Colonic mucosa (tissue), 4 donors: ENCODE measurements at regions of chr9 and their contacts with region 1.

Region 1: DNA sequence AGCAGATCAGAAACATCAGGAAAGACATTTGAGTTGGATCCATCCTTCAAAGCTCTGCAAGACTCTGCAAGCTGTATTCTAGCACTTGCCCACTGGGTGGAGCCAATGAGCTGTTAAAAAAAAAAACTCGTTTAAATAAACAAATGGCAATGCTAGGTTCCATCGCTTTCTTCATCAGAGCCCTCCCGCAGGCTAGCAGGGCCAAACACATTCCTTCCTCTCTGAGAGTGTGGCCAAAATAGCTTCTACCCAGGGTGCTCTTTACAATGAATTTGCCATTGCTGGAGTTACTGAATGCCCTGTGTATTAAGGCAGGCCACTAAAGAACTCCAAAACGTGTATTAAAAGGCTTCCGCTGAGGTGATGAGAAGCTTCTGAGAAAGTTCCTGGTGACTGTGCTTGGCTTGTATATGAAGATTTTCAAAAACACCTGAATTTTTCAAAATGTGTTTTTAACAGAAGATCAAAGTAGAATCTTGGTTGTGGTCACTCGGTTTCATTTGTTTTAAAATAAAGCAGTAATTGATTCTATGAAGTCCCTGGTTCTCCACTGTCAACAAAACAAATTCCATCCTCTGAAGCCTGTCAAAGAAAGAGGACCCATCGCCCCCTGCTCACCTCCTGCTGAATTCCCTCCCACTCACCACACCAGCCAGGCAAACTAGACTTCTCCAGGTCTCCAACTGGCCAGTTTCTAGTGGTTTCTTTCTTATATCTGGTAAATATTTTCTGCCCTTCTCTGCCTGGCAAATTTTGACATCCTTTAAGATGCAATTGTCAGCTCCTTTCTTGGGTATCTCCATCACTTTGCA is 36.5 kb upstream of the EQTN start:
- DNase-seq: peak; percentile 66
- H3K4me3 ChIP-seq: no peak overlapping the region
- H3K27ac ChIP-seq: no peak overlapping the region
- H3K4me1 ChIP-seq: peaks cover 1% of the 10 kb centered on the region
- H3K27me3 ChIP-seq: no peaks in the 10 kb centered on the region
- CTCF ChIP-seq: peak; percentile 92

Region 2: GRCh38 chr9:27394154-27394825 is 60.8 kb after region 1 on chr9:
- intact Hi-C with region 1: no loop called
- DNase-seq: no peak
- H3K4me3 ChIP-seq: no peak overlapping the region
- H3K27ac ChIP-seq: peak overlapping the region; percentile 53
- H3K4me1 ChIP-seq: no peaks in the 10 kb centered on the region
- H3K27me3 ChIP-seq: no peaks in the 10 kb centered on the region
- CTCF ChIP-seq: no peak

Region 3: GRCh38 chr9:27460226-27461023 is 127.0 kb after region 1 on chr9:
- intact Hi-C with region 1: loop called (anchors 10 kb)
- DNase-seq: no peak
- H3K4me3 ChIP-seq: no peak overlapping the region
- H3K27ac ChIP-seq: peak overlapping the region; percentile 53
- H3K4me1 ChIP-seq: peaks cover 3% of the 10 kb centered on the region
- H3K27me3 ChIP-seq: no peaks in the 10 kb centered on the region
- CTCF ChIP-seq: no peak

Region 4: DNA sequence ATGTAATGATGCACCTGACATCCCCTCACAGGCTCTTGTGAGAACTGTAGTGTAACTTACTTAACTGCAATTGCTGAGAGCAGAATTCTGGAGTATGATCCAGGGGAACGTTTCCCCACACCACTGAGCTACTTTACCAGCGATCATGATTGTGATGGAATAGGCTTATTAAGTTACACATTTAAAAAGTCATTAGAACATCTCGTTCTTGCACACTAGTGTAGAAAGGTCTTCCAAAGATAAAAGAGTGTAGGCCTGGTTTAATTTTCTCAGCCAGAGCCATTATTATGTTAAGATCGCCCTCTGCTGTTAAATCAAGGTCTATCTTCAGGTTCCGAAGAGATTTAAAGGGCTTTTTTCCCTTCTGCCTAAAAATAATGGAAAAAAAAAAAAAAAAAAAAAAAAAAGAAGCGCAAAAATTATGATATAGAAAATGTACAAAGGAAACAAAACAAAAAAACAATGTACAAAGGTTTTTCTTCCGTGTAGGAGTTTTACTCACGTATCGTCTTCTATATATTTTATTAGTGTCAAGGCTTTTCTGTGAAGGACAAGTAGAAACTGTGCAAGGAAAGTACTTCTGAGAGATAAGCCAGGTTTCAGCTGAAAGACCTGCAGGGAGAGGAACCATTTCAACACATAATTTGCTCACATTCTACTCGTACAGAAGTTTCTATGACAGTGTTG is 214.8 kb after region 1 on chr9:
- intact Hi-C with region 1: loop called (anchors 2 kb)
- DNase-seq: no peak
- H3K4me3 ChIP-seq: no peak overlapping the region
- H3K27ac ChIP-seq: no peak overlapping the region
- H3K4me1 ChIP-seq: no peaks in the 10 kb centered on the region
- H3K27me3 ChIP-seq: no peaks in the 10 kb centered on the region
- CTCF ChIP-seq: peak; percentile 38